ENCODE measurements at regions of chr3 and their contacts with region 1.

Region 1: DNA sequence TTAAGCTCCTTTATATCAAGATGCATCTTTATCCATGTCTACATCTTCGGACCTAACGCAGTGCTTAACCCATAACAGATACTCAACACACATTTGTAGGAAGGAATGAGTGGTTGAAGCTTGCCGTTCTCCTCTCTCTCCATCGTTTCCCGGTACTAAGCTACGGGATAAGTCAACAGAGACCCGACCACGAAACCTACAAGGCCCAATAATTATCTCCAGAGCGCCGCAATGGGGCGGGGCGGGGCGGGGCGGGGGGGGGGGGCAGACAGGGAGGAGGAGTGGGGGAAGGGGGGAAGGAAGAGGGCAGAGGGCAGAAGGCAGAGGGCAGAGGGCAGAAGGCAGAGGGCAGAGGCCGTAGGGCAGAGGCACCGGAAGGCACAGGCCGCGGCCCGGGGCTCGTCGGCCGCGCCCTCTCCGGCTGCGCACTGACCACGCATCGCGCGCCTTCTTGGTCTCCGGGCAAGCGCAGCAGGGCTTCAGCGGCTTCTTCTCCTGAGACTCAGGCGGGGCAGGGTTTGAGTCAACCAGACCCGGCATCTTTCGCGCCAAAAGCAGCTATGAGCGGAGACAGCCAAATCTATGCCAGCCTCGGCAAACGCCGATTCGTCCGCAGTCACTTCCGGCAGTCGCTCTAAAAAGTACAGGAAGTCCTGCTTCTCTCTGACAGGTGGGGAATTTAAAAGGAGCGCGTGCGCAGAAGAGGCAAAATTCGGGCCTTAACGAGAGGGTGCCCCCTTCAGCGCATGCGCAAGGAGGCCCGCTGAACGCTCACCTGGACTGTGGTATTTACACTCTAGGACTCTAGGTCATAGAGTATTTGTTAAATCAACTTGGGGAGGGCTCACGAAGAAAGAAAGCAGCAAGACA is at the start of gene COX17:
- DNase-seq: peak; percentile 92 to 99 (median 96)
- ATAC-seq: peak; percentile 86
- H3K4me3 ChIP-seq: peak within 1 kb of the TSS; percentile 26 to 79
- H3K4me3 Mint-ChIP-seq: peak within 1 kb of the TSS; percentile 87
- H3K27ac ChIP-seq: peak within 1 kb of the TSS; percentile 49 to 95
- H3K27ac Mint-ChIP-seq: peak within 1 kb of the TSS; percentile 96
- H3K4me1 ChIP-seq: peaks cover 20% of the 10 kb centered on the region
- H3K4me1 Mint-ChIP-seq: peaks cover 35% of the 10 kb centered on the region
- H3K27me3 ChIP-seq: no peaks in the 10 kb centered on the region
- H3K27me3 Mint-ChIP-seq: no peaks in the 10 kb centered on the region
- CTCF ChIP-seq: no peak
- total RNA-seq, gene COX17: 22.4 to 23.2 TPM

Region 2: GRCh38 chr3:119034256-119035013 is 642.6 kb before region 1 on chr3 and contains the start of gene IGSF11:
- CTCF ChIA-PET with region 1: no interaction called
- POLR2A ChIA-PET with region 1: no interaction called
- intact Hi-C with region 1: loop called in 1 of 2 experiments (anchors 5 kb)
- DNase-seq: peak; percentile 33 to 81 (median 64)
- ATAC-seq: peak; percentile 89
- H3K4me3 ChIP-seq: peak within 1 kb of the TSS; percentile 58 to 64
- H3K4me3 Mint-ChIP-seq: peak within 1 kb of the TSS; percentile 90
- H3K27ac ChIP-seq: peak within 1 kb of the TSS in 1 of 2 experiments; percentile 22
- H3K27ac Mint-ChIP-seq: no peak within 1 kb of the TSS
- H3K4me1 ChIP-seq: peaks cover 6% of the 10 kb centered on the region
- H3K4me1 Mint-ChIP-seq: peaks cover 15% of the 10 kb centered on the region
- H3K27me3 ChIP-seq: peaks cover 0 to 14% of the 10 kb centered on the region in 2 experiments
- H3K27me3 Mint-ChIP-seq: peaks cover 29% of the 10 kb centered on the region
- CTCF ChIP-seq: peak; percentile 67
- total RNA-seq, gene IGSF11: 0.57 to 0.86 TPM

Region 3: GRCh38 chr3:119240591-119241434 is 436.2 kb before region 1 on chr3 and contains the start of gene B4GALT4:
- CTCF ChIA-PET with region 1: no interaction called
- POLR2A ChIA-PET with region 1: no interaction called
- intact Hi-C with region 1: loop called in 1 of 2 experiments (anchors 10 kb)
- DNase-seq: peak; percentile 34 to 83 (median 63)
- ATAC-seq: peak; percentile 67
- H3K4me3 ChIP-seq: peak within 1 kb of the TSS; percentile 66 to 72
- H3K4me3 Mint-ChIP-seq: peak within 1 kb of the TSS; percentile 88
- H3K27ac ChIP-seq: peak within 1 kb of the TSS; percentile 58 to 67
- H3K27ac Mint-ChIP-seq: peak within 1 kb of the TSS; percentile 92
- H3K4me1 ChIP-seq: peaks cover 30% of the 10 kb centered on the region
- H3K4me1 Mint-ChIP-seq: peaks cover 40% of the 10 kb centered on the region
- H3K27me3 ChIP-seq: no peaks in the 10 kb centered on the region
- H3K27me3 Mint-ChIP-seq: no peaks in the 10 kb centered on the region
- CTCF ChIP-seq: no peak
- total RNA-seq, gene B4GALT4: 18.2 to 18.6 TPM

Region 4: DNA sequence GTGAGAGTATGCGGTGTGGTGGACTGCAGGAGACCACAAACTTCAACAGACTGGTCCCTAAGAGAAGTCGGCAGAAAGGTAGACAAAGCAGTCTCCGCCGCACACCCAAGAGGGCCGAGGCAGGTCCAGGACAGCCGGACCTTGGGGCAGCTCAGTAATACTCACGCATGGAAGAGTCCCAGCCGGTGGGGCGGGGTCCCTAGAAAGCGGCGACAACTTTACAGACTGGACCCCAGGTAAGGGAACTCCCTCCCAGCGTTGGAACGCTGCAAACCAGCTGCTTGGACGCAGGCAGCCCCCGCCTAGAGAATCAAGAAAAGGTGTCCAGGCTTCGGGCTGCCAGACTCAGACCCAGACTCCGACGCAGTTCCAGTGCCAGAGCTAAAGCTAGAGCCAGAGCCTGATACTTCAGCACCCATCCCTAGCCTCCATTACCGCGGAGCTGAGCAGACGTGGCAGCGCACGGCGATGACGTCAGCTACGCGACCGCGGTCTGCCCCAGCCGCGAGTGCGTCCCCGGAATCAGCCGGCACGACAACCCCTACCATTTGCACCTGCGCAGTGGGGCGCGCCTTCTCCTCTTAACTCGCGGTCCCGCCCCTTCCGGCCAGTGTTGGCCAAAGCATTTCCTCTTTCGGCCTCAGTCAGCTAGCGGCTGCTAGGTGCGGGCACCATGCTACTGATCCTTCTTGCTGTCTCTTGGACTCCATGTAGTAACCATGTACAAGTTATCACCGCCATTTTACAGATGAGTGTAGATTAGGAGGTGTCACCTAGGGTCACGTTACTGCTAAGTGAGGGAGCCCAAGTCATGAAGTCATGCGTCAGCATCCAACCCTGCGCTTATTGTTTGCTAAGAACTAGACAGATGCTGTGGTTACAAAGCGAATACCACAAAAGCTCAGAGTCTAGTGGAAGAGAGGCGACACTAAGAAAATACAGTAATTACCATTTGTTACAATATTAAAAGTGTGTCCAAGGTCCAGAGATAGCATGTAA is 213.5 kb before region 1 on chr3 and contains the start of gene TMEM39A:
- CTCF ChIA-PET with region 1: no interaction called
- POLR2A ChIA-PET with region 1: interaction called, 7 read pairs
- intact Hi-C with region 1: loop called (anchors 1 to 2 kb)
- DNase-seq: peak; percentile 98 to 100 (median 99)
- ATAC-seq: peak; percentile 86
- H3K4me3 ChIP-seq: peak within 1 kb of the TSS; percentile 93 to 94
- H3K4me3 Mint-ChIP-seq: peak within 1 kb of the TSS; percentile 93
- H3K27ac ChIP-seq: peak within 1 kb of the TSS; percentile 85 to 97
- H3K27ac Mint-ChIP-seq: peak within 1 kb of the TSS; percentile 96
- H3K4me1 ChIP-seq: peaks cover 19% of the 10 kb centered on the region
- H3K4me1 Mint-ChIP-seq: peaks cover 44% of the 10 kb centered on the region
- H3K27me3 ChIP-seq: no peaks in the 10 kb centered on the region
- H3K27me3 Mint-ChIP-seq: no peaks in the 10 kb centered on the region
- CTCF ChIP-seq: no peak
- total RNA-seq, gene TMEM39A: 67.8 to 68.0 TPM

Region 5: GRCh38 chr3:119498186-119498987 is 178.6 kb before region 1 on chr3 and contains the start of gene TIMMDC1:
- CTCF ChIA-PET with region 1: no interaction called
- POLR2A ChIA-PET with region 1: interaction called, 3 read pairs
- intact Hi-C with region 1: loop called (anchors 1 to 2 kb)
- DNase-seq: peak; percentile 93 to 99 (median 98)
- ATAC-seq: peak; percentile 96
- H3K4me3 ChIP-seq: peak within 1 kb of the TSS; percentile 81 to 87
- H3K4me3 Mint-ChIP-seq: peak within 1 kb of the TSS; percentile 100
- H3K27ac ChIP-seq: peak within 1 kb of the TSS; percentile 92 to 95
- H3K27ac Mint-ChIP-seq: peak within 1 kb of the TSS; percentile 100
- H3K4me1 ChIP-seq: peaks cover 25% of the 10 kb centered on the region
- H3K4me1 Mint-ChIP-seq: peaks cover 40% of the 10 kb centered on the region
- H3K27me3 ChIP-seq: no peaks in the 10 kb centered on the region
- H3K27me3 Mint-ChIP-seq: no peaks in the 10 kb centered on the region
- CTCF ChIP-seq: no peak
- total RNA-seq, gene TIMMDC1: 12.1 to 16.8 TPM

Region 6: GRCh38 chr3:119618905-119619493 is 58.0 kb before region 1 on chr3:
- CTCF ChIA-PET with region 1: no interaction called
- POLR2A ChIA-PET with region 1: no interaction called
- intact Hi-C with region 1: no loop called
- DNase-seq: no peak
- ATAC-seq: no peak
- H3K4me3 ChIP-seq: no peak overlapping the region
- H3K4me3 Mint-ChIP-seq: no peak overlapping the region
- H3K27ac ChIP-seq: no peak overlapping the region
- H3K27ac Mint-ChIP-seq: no peak overlapping the region
- H3K4me1 ChIP-seq: no peaks in the 10 kb centered on the region
- H3K4me1 Mint-ChIP-seq: no peaks in the 10 kb centered on the region
- H3K27me3 ChIP-seq: no peaks in the 10 kb centered on the region
- H3K27me3 Mint-ChIP-seq: peaks cover 3% of the 10 kb centered on the region
- CTCF ChIP-seq: no peak

Region 7: DNA sequence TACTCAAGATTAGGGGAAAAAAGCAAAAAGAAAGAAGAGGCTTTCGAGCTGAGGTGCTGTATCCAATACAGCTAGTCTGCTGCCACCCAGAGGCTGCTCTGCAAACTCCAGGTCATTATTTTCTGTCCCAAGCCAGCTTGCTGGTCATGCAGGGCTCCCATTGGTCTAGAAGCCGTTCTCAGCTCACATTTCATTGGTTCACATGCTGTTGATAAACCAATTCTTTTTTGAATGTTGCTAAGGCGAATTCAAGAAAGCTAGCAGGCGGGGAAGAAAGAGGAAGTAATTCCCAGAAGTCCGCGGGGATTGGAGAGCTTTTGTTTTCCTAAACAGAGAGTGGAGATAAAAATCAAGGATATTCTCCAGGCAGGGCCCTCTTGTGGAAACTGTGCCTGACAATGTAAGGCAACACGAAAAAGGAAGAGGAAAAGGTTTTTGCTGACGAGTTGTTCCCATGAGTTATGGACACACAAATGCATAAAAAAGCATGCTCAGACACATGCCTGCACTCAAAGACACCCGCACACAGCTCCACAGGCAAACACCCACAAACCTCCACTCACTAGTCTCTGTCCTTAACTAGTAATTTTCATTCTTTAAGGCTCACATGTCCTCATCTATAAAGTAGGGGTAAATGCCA is 740.4 kb after region 1 on chr3:
- CTCF ChIA-PET with region 1: no interaction called
- POLR2A ChIA-PET with region 1: no interaction called
- intact Hi-C with region 1: loop called in 1 of 2 experiments (anchors 2 kb)
- DNase-seq: peak; percentile 66 to 90 (median 80)
- ATAC-seq: peak; percentile 99
- H3K4me3 ChIP-seq: peak overlapping the region; percentile 47 to 55
- H3K4me3 Mint-ChIP-seq: peak overlapping the region; percentile 84
- H3K27ac ChIP-seq: no peak overlapping the region
- H3K27ac Mint-ChIP-seq: no peak overlapping the region
- H3K4me1 ChIP-seq: no peaks in the 10 kb centered on the region
- H3K4me1 Mint-ChIP-seq: peaks cover 21% of the 10 kb centered on the region
- H3K27me3 ChIP-seq: no peaks in the 10 kb centered on the region
- H3K27me3 Mint-ChIP-seq: peaks cover 4% of the 10 kb centered on the region
- CTCF ChIP-seq: peak; percentile 87

Region 8: GRCh38 chr3:120742198-120742849 is 1065.3 kb after region 1 on chr3 and contains the starts of genes GTF2E1 and RABL3:
- CTCF ChIA-PET with region 1: no interaction called
- POLR2A ChIA-PET with region 1: no interaction called
- intact Hi-C with region 1: loop called in 1 of 2 experiments (anchors 5 kb)
- DNase-seq: peak; percentile 93 to 99 (median 97)
- ATAC-seq: peak; percentile 96
- H3K4me3 ChIP-seq: peak within 1 kb of the TSS; percentile 89 to 90
- H3K4me3 Mint-ChIP-seq: peak within 1 kb of the TSS; percentile 94
- H3K27ac ChIP-seq: peak within 1 kb of the TSS; percentile 97 to 98
- H3K27ac Mint-ChIP-seq: peak within 1 kb of the TSS; percentile 98
- H3K4me1 ChIP-seq: peaks cover 16% of the 10 kb centered on the region
- H3K4me1 Mint-ChIP-seq: peaks cover 49% of the 10 kb centered on the region
- H3K27me3 ChIP-seq: no peaks in the 10 kb centered on the region
- H3K27me3 Mint-ChIP-seq: no peaks in the 10 kb centered on the region
- CTCF ChIP-seq: no peak
- total RNA-seq, gene GTF2E1: 5.8 to 7.8 TPM
- total RNA-seq, gene RABL3: 14.0 to 15.2 TPM